Naive thymus-derived CD4-positive, alpha-beta T cell (primary cell): ENCODE measurements at regions of chr2 and their contacts with region 1.

Region 1: DNA sequence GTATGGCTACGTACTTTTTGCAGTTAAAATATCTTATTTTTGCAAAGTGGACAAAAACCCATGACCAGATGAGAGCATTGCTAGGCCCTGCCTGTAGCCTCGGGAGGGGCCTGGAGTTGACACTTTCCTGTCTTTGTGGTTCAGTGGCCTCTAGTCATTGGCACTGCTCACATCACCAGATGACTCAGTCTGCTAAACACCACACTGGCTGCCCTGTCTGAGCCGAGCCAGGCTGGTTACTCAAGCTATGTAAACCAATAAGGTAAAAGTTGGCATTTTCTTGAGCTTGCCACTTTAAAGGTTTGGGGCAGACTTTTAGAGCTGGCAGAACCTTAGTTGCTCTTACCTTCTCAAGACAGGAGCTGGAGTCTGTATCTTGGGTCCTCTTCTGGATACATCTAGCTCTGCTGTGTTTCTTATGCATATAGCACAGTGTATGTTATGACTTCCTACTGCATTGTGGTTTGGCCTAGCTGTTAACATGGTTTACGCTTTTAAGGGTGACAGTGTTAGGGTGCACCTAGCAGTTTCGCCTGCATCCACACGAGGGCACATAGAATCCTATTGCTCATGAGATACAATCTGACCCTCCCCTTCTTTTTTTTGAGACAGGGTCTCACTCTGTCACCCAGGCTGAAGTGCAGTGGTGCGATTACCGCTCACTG is 76.4 kb downstream of the AP1S3 start:
- DNase-seq: peak in 2 of 9 donors; percentile 6 to 46
- ATAC-seq: peak; percentile 89
- H3K4me3 ChIP-seq: peak overlapping the region; percentile 2
- H3K4me3 Mint-ChIP-seq: peak overlapping the region in 3 of 10 donors; percentile 10 to 52 (median 13)
- H3K27ac ChIP-seq: no peak overlapping the region
- H3K27ac Mint-ChIP-seq: peak overlapping the region in 1 of 9 donors; percentile 87
- H3K4me1 ChIP-seq: peaks cover 0 to 29% of the 10 kb centered on the region in 2 donors
- H3K4me1 Mint-ChIP-seq: peaks cover 0 to 25% (median 4%) of the 10 kb centered on the region in 7 donors
- H3K27me3 ChIP-seq: no peaks in the 10 kb centered on the region
- H3K27me3 Mint-ChIP-seq: no peaks in the 10 kb centered on the region

Region 2: GRCh38 chr2:223697892-223698645 is 62.9 kb before region 1 on chr2:
- CTCF ChIA-PET with region 1: no interaction called
- POLR2A ChIA-PET with region 1: no interaction called
- intact Hi-C with region 1: loop called in 1 of 2 experiments (anchors 2 kb)
- DNase-seq: no peak
- ATAC-seq: no peak
- H3K4me3 ChIP-seq: no peak overlapping the region
- H3K4me3 Mint-ChIP-seq: no peak overlapping the region
- H3K27ac ChIP-seq: no peak overlapping the region
- H3K27ac Mint-ChIP-seq: no peak overlapping the region
- H3K4me1 ChIP-seq: no peaks in the 10 kb centered on the region
- H3K4me1 Mint-ChIP-seq: peaks cover 0 to 9% (median 0%) of the 10 kb centered on the region in 7 donors
- H3K27me3 ChIP-seq: no peaks in the 10 kb centered on the region
- H3K27me3 Mint-ChIP-seq: peaks cover 4 to 16% (median 9%) of the 10 kb centered on the region in 5 donors